ENCODE measurements at regions of chr11 and their contacts with region 1.

Region 1: GRCh38 chr11:3723014-3723708 is 52.0 kb upstream of the CHRNA10 start:
- DNase-seq: no peak
- ATAC-seq: no peak
- H3K4me3 ChIP-seq: no peak overlapping the region
- H3K27ac ChIP-seq: no peak overlapping the region
- H3K4me1 ChIP-seq: no peaks in the 10 kb centered on the region
- H3K27me3 ChIP-seq: no peaks in the 10 kb centered on the region
- CTCF ChIP-seq: no peak
- EP300 ChIP-seq: no peak
- POLR2A ChIP-seq: no peak
- RAD21 ChIP-seq: no peak

Region 2: DNA sequence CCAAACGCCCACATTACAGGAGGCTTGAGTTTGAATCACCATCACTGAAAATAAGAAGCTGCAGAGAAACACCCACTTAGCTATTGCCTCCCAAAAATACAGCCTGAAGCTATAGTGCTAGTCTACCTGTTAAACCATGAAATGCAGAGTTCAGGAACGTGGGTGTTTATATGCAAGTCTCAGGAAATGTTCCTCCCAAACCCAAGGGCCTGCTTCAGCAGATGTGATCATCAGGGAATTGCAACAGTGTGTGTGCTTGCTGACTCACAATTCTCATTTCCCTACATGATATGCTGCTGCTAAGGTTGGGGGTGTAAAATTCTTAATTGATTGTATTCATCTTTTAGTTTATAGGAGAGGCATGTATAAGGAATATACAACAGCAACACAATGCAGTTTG is 24.5 kb after region 1 on chr11:
- CTCF ChIA-PET with region 1: no interaction called
- POLR2A ChIA-PET with region 1: no interaction called
- RAD21 ChIA-PET with region 1: no interaction called
- SMC1A ChIA-PET with region 1: no interaction called
- in situ Hi-C with region 1: no loop called
- intact Hi-C with region 1: no loop called
- DNase-seq: no peak
- ATAC-seq: no peak
- H3K4me3 ChIP-seq: no peak overlapping the region
- H3K27ac ChIP-seq: no peak overlapping the region
- H3K4me1 ChIP-seq: no peaks in the 10 kb centered on the region
- H3K27me3 ChIP-seq: no peaks in the 10 kb centered on the region
- CTCF ChIP-seq: no peak
- EP300 ChIP-seq: no peak
- POLR2A ChIP-seq: no peak
- RAD21 ChIP-seq: no peak

Region 3: DNA sequence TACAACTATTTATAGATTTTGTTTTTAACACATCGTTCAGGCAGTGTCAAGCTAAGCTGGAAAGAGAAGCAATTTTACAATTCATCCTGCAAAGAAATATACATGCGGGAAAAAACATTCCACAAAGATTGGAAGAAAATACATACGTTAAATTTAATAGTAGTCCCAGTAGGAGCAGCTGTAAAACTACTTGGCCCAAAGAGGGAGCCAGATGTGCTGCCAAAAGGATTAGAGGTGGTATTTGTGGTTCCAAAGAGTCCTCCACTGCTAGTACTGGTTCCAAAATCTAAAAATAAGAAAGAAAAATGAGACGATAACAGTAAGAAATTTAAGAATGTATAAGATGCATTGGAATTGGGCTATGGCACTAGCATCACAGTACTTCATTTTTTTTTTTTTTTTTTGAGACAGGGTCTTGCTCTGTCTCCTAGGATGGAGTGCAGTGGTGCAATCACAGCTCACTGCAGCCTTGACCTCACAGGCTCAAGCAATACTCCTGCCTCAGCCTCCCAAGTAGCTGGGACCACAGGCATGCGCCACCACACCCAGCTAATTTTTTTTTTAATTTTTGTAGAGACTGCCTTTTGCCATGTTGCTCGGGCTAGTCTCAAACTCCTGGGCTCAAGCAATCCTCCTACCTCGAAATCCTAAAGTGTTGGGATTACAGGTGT is 52.7 kb after region 1 on chr11:
- CTCF ChIA-PET with region 1: no interaction called
- POLR2A ChIA-PET with region 1: no interaction called
- RAD21 ChIA-PET with region 1: no interaction called
- SMC1A ChIA-PET with region 1: no interaction called
- in situ Hi-C with region 1: no loop called
- intact Hi-C with region 1: loop called (anchors 10 kb)
- DNase-seq: no peak
- ATAC-seq: no peak
- H3K4me3 ChIP-seq: no peak overlapping the region
- H3K27ac ChIP-seq: no peak overlapping the region
- H3K4me1 ChIP-seq: no peaks in the 10 kb centered on the region
- H3K27me3 ChIP-seq: no peaks in the 10 kb centered on the region
- CTCF ChIP-seq: no peak
- EP300 ChIP-seq: no peak
- POLR2A ChIP-seq: no peak
- RAD21 ChIP-seq: no peak

Measured in GM12878 (cell line).